ENCODE measurements at regions of chr6 and their contacts with region 1.

Region 1: DNA sequence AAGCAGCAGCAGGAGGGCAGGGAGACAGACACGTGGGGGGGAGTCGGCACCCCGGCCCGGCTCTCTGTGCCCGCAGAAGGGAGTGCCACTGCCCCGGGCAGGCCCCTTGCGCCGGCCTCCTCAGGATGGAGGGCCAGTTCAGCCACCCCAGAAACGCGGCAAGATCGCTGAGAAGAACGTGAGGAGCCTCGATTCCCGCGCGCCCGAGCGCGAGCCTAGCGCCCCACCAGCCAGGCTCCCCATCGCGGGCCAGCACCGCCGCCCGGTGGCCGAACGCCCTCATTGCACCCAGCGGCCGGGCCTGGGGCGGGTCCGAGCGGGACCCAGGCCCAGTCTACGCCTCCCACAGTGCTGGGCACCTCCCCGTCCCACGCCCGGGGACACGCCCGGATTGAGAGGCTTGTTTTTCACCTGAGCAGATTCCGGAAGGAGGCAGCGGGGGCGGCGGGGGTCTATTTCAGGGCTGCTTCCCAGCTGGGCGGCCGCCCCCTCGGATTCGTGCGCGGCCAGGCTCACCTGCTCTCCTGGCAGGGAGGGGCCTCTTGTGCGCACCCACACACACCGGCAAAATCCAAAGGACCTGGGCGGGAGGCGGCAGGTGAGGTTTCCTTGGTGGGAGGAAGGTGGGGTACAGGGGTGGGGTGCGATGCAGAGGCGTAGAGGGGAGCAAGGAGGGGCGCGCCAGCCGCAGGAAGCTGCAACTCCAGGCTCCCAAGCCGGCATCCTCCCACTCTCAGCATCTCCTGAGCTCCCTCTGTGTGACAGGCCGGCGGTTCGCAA is 9.0 kb upstream of the GRM4 start:
- DNase-seq: peak; percentile 49 to 64 (median 58)
- H3K4me3 ChIP-seq: no peak overlapping the region
- H3K4me3 Mint-ChIP-seq: peak overlapping the region in 5 of 8 donors; percentile 35 to 74 (median 66)
- H3K27ac ChIP-seq: no peak overlapping the region
- H3K27ac Mint-ChIP-seq: no peak overlapping the region
- H3K4me1 ChIP-seq: peaks cover 10% of the 10 kb centered on the region
- H3K4me1 Mint-ChIP-seq: peaks cover 0 to 8% (median 2%) of the 10 kb centered on the region in 4 donors
- H3K27me3 ChIP-seq: peaks cover 22% of the 10 kb centered on the region
- H3K27me3 Mint-ChIP-seq: peaks cover 25 to 27% of the 10 kb centered on the region in 2 donors

Region 2: GRCh38 chr6:33744001-33744848 is 410.6 kb before region 1 on chr6:
- CTCF ChIA-PET with region 1: interaction called, 19 read pairs
- POLR2A ChIA-PET with region 1: no interaction called
- intact Hi-C with region 1: loop called (anchors 1 kb)
- DNase-seq: peak; percentile 57 to 68 (median 66)
- H3K4me3 ChIP-seq: no peak overlapping the region
- H3K4me3 Mint-ChIP-seq: no peak overlapping the region
- H3K27ac ChIP-seq: no peak overlapping the region
- H3K27ac Mint-ChIP-seq: no peak overlapping the region
- H3K4me1 ChIP-seq: no peaks in the 10 kb centered on the region
- H3K4me1 Mint-ChIP-seq: peaks cover 0 to 4% (median 3%) of the 10 kb centered on the region in 4 donors
- H3K27me3 ChIP-seq: peaks cover 7% of the 10 kb centered on the region
- H3K27me3 Mint-ChIP-seq: peaks cover 0 to 7% of the 10 kb centered on the region in 2 donors

Region 3: DNA sequence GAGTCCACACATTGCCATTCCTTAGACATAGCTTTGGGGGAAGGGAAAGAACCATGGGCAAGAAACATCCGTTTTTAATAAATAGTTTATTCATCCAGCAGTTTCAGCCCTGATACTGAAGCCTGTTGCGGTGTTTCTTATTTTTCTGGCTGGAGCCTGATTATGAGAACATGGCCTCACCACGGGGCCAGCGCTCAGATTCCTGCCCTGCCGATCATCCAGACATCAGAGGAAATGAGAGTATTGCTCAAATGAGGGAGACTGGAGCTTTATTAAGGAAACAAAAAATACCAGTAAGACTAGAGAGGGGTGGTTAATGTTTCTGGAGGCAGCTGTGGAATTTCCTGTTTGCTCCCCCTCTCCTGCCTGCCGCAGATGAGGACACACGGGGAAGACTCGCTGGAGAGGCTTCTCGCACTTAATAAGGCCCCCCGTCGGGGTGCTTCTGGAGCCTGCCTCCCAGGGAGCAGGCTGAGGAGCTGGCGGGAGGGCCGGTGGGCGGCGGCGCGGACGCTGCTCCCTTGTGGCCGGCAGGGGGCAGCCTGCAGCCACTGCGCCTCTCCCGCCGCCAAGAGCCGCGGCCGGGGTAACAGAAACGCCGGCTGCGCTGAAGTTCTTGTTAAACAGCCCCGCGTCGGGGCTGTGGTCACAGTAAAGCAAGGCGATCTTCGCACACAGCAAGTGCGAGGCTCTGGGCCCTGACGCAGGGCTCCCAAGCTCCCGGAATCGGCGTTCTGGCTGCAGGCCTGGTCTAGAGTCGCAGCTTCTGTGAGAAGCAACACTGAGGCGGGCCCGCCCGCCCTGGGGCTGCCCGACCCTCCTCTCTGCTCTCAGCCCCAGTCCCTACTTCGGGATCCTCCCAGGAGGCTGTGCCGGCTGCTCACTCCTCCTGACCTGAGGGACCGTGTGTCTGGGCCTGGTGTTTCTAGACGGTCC is 383.4 kb before region 1 on chr6:
- CTCF ChIA-PET with region 1: interaction called, 48 read pairs
- POLR2A ChIA-PET with region 1: no interaction called
- intact Hi-C with region 1: loop called (anchors 1 kb)
- DNase-seq: peak; percentile 54 to 68 (median 60)
- H3K4me3 ChIP-seq: no peak overlapping the region
- H3K4me3 Mint-ChIP-seq: peak overlapping the region in 1 of 8 donors; percentile 29
- H3K27ac ChIP-seq: no peak overlapping the region
- H3K27ac Mint-ChIP-seq: peak overlapping the region in 6 of 7 donors; percentile 21 to 88 (median 50)
- H3K4me1 ChIP-seq: peaks cover 6% of the 10 kb centered on the region
- H3K4me1 Mint-ChIP-seq: peaks cover 10 to 15% (median 13%) of the 10 kb centered on the region in 4 donors
- H3K27me3 ChIP-seq: no peaks in the 10 kb centered on the region
- H3K27me3 Mint-ChIP-seq: no peaks in the 10 kb centered on the region

Region 4: DNA sequence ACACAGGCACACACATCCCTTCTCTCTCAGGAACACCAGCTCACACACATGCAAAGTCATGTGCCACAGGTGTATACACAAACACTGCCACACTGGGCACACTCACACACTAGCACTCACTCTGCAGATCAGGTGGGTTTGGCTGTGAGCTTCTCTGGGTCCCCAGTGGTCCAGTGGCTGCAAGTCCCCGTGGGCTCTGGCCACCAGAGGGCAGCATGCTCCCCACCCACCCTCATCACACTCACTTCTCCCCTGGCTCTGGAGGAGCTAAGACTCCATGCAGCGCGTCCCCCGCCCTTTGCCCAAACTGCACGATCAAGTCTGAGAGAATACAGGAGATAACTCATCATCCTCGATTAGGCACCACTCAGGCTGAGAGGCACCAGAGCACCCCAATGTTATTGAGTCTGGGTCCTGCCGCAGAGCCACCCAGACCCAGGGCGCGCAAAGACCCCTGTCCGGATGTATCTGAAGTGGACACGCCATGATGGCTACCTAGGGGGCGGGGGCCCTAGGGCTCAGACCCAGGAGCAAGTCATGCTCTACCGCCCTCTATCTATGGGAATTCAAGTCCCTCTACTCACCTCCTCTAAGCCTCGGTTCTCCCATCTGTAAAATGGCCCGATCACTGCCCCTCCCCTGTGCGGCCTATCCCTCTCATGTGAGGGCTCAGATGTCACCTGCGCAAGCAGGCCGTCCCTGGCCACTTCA is 99.5 kb before region 1 on chr6:
- CTCF ChIA-PET with region 1: interaction called, 38 read pairs
- POLR2A ChIA-PET with region 1: no interaction called
- intact Hi-C with region 1: no loop called
- DNase-seq: peak; percentile 43 to 50 (median 46)
- H3K4me3 ChIP-seq: no peak overlapping the region
- H3K4me3 Mint-ChIP-seq: no peak overlapping the region
- H3K27ac ChIP-seq: no peak overlapping the region
- H3K27ac Mint-ChIP-seq: no peak overlapping the region
- H3K4me1 ChIP-seq: no peaks in the 10 kb centered on the region
- H3K4me1 Mint-ChIP-seq: peaks cover 0 to 5% (median 4%) of the 10 kb centered on the region in 4 donors
- H3K27me3 ChIP-seq: no peaks in the 10 kb centered on the region
- H3K27me3 Mint-ChIP-seq: peaks cover 2 to 10% of the 10 kb centered on the region in 2 donors

Region 5: DNA sequence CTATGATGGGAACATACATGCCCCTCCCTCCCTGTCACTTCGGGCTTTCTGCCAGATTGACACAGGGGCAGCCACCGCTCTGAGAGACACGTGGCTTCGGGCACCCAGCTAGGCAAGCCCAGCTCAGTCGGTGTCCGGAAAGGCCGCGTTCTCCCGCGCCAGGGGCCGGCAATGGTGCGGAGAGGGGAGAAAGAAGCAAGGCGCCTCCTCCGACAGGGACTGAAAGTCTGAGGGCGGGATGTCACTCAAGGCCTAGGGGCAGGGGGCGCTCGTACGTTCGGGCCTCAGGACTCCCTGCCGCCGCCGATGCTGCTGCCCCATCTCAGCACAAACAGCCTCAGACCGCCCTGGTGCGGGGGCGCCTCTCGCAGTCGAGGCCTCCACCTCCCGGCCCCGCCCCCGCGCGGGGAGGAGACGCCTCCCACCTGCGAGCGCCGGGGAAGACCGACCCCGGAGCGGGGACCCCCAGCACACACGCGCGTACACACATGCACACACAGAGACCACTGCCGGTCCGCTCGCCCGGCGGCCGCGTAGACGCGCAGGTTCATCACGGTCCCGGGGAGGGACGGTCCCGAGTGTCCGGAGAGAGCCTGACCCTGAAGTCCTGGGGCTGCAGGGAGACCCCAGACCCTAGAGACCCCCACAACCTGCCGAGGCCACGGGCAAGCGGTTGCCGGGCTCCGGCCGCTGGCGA is 10.8 kb before region 1 on chr6:
- CTCF ChIA-PET with region 1: interaction called, 7 read pairs
- POLR2A ChIA-PET with region 1: no interaction called
- intact Hi-C with region 1: loop called (anchors 1 kb)
- DNase-seq: peak; percentile 26 to 55 (median 35)
- H3K4me3 ChIP-seq: no peak overlapping the region
- H3K4me3 Mint-ChIP-seq: peak overlapping the region in 7 of 8 donors; percentile 27 to 70 (median 62)
- H3K27ac ChIP-seq: no peak overlapping the region
- H3K27ac Mint-ChIP-seq: no peak overlapping the region
- H3K4me1 ChIP-seq: peaks cover 26% of the 10 kb centered on the region
- H3K4me1 Mint-ChIP-seq: peaks cover 3 to 32% (median 15%) of the 10 kb centered on the region in 4 donors
- H3K27me3 ChIP-seq: peaks cover 42% of the 10 kb centered on the region
- H3K27me3 Mint-ChIP-seq: peaks cover 42 to 58% of the 10 kb centered on the region in 2 donors